ENCODE measurements at regions of chr7 and their contacts with region 1.

Region 1: DNA sequence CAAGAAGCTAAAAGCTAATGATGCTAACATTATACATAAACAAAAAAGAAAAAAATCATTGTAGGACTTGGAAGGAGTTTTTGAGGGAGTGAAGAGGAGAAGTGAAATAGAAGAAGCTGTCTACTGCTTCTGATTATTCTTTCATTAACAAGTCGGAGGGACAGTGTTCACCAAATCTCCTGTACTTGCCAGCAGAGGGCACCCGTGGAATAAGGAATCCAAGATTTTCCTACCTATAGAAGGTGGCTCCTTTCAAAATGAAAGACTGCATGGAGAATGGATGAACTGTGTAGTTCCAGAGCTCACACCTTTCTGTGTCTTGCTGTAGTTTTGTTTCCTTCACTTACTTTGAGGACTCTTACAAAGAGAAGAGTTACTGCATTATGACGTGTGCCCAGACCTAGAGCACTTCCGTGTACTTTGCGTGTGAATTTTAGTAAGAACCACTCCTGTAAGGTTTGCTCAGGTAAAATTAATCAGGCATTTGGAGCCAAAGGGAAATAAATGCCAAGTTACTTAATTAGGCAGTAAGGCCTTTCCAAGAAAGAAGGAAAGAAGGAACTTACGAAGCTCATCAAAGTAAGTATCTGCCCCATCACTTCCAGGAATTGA is 145.1 kb downstream of the SEMA3D start:
- H3K4me3 ChIP-seq: no peak overlapping the region
- H3K27ac ChIP-seq: no peak overlapping the region
- H3K4me1 ChIP-seq: peaks cover 5% of the 10 kb centered on the region
- CTCF ChIP-seq: peak; percentile 43

Region 2: GRCh38 chr7:84900215-84900614 is 141.5 kb before region 1 on chr7:
- CTCF ChIA-PET with region 1: no interaction called
- POLR2A ChIA-PET with region 1: no interaction called
- H3K4me3 ChIP-seq: no peak overlapping the region
- H3K27ac ChIP-seq: no peak overlapping the region
- H3K4me1 ChIP-seq: no peaks in the 10 kb centered on the region
- CTCF ChIP-seq: no peak

Region 3: GRCh38 chr7:85000735-85001350 is 40.9 kb before region 1 on chr7:
- CTCF ChIA-PET with region 1: no interaction called
- POLR2A ChIA-PET with region 1: no interaction called
- H3K4me3 ChIP-seq: no peak overlapping the region
- H3K27ac ChIP-seq: no peak overlapping the region
- H3K4me1 ChIP-seq: peaks cover 26% of the 10 kb centered on the region
- CTCF ChIP-seq: no peak

Region 4: GRCh38 chr7:85030893-85031292 is 10.8 kb before region 1 on chr7:
- CTCF ChIA-PET with region 1: interaction called, 21 read pairs
- POLR2A ChIA-PET with region 1: no interaction called
- H3K4me3 ChIP-seq: no peak overlapping the region
- H3K27ac ChIP-seq: no peak overlapping the region
- H3K4me1 ChIP-seq: peaks cover 21% of the 10 kb centered on the region
- CTCF ChIP-seq: no peak

Region 5: DNA sequence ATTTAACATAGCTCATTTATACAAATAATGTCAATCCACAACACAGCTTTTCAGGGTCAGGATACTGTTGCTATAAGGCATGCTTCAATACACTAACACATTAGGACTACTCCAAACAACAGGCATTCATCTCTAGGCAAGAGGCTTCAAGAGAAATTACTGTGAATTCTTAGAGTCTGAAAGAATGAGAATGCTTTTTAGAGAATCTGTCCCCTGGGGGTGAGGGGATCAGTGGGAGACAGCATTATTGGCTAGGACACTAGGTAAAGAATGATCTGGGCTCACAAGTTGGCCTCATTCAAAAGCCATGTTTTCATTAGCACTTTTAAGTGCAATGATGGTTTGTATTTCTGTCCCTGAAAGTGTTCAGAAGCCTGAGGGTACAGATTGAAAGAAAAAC is 12.6 kb after region 1 on chr7:
- CTCF ChIA-PET with region 1: interaction called, 13 read pairs
- POLR2A ChIA-PET with region 1: no interaction called
- H3K4me3 ChIP-seq: no peak overlapping the region
- H3K27ac ChIP-seq: no peak overlapping the region
- H3K4me1 ChIP-seq: peaks cover 13% of the 10 kb centered on the region
- CTCF ChIP-seq: no peak

Region 6: GRCh38 chr7:85186521-85187241 is 145.0 kb after region 1 on chr7 and contains the start of gene SEMA3D:
- CTCF ChIA-PET with region 1: interaction called, 16 read pairs
- POLR2A ChIA-PET with region 1: no interaction called
- H3K4me3 ChIP-seq: peak within 1 kb of the TSS; percentile 89
- H3K27ac ChIP-seq: peak within 1 kb of the TSS; percentile 97
- H3K4me1 ChIP-seq: peaks cover 10% of the 10 kb centered on the region; the same call in 1 of the 2 replicates
- CTCF ChIP-seq: peak; percentile 75

Region 7: GRCh38 chr7:85554236-85555178 is 512.8 kb after region 1 on chr7:
- CTCF ChIA-PET with region 1: interaction called, 32 read pairs
- POLR2A ChIA-PET with region 1: no interaction called
- H3K4me3 ChIP-seq: no peak overlapping the region
- H3K27ac ChIP-seq: no peak overlapping the region
- H3K4me1 ChIP-seq: no peaks in the 10 kb centered on the region
- CTCF ChIP-seq: no peak

Region 8: DNA sequence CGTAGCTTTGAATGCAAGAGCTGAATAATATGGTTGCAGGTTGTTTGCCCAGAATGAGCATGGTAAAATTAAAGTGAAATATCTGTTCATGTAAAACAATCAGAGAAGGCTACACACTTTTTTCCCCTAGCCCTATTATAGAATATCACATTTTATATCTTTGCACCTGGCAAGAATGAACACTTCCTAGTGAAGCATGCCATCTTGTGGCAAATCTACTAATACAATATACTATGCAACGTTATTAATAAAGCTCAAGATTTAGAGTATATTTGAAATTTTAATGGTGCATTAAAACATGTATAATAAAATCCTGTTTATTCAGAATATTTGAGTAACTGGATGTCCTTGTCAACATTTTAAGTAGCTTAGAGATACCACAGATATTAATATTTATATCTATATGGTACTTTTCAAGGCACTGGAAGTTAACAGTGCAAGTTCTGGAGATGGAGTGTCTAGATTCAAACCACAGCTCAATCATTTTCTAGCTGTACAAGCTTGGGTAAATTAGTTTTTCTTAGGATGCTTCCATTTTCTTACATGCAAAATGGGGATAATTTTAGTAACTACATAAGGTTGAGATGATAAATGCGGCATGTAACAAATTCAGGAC is 788.2 kb after region 1 on chr7:
- CTCF ChIA-PET with region 1: interaction called, 42 read pairs
- POLR2A ChIA-PET with region 1: no interaction called
- H3K4me3 ChIP-seq: no peak overlapping the region
- H3K27ac ChIP-seq: no peak overlapping the region
- H3K4me1 ChIP-seq: no peaks in the 10 kb centered on the region
- CTCF ChIP-seq: no peak

Region 9: DNA sequence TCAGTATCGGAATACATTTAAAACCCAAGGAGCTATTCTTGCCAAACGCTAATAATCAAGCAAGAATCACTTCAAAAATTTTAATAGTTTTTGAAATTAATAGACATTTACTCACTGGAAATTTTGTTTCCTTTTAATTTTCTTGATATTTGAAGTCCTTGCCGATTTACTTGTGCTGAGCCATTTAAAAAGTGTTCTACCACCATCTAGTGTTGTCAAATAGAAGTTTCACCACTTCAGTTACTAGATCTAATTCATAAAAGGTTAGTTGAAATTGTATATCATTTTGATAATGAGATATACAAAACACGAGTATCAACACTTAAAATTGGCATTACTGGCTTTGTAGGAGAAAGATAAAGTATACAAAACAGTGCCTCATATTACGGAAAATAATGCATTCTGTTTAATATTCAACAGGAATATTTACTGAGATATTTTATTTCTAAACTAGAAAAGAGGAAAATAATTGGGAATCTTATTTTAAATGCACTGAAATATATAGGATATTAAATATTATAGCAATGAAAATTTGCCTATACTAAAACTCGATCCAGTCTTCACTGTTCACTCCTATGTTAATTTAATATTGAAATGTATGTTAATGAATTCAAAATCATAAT is 810.0 kb after region 1 on chr7:
- CTCF ChIA-PET with region 1: interaction called, 11 read pairs
- POLR2A ChIA-PET with region 1: no interaction called
- H3K4me3 ChIP-seq: no peak overlapping the region
- H3K27ac ChIP-seq: no peak overlapping the region
- H3K4me1 ChIP-seq: no peaks in the 10 kb centered on the region
- CTCF ChIP-seq: no peak